ENCODE measurements at regions of chr18 and their contacts with region 1.

Region 1: DNA sequence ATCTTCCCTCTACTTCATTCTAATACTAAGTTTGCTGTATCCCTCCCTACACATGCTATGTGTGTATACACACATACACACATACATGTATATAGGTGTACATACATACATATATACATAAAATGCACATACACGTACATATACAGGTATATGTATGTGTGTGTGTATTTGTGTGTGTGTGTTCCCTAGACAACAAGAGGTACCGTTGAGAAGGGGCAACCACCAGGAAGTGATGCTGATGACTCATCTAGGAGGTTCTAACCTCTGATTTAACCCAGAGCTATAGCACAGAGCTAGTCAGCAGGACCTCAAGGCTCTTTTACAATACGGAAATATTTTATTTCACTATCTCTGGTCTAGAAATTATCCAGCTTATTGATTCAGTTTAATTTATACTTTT is 139.2 kb downstream of the LAMA3 start:
- DNase-seq: peak in 12 of 14 experiments; percentile 4 to 91 (median 36)
- ATAC-seq: peak; percentile 96
- H3K4me3 ChIP-seq: no peak overlapping the region
- H3K4me3 Mint-ChIP-seq: no peak overlapping the region
- H3K27ac ChIP-seq: peak overlapping the region in 1 of 2 donors; percentile 70
- H3K27ac Mint-ChIP-seq: peak overlapping the region; percentile 25
- H3K4me1 ChIP-seq: peaks cover 15% of the 10 kb centered on the region
- H3K4me1 Mint-ChIP-seq: peaks cover 33% of the 10 kb centered on the region
- H3K27me3 ChIP-seq: no peaks in the 10 kb centered on the region
- H3K27me3 Mint-ChIP-seq: no peaks in the 10 kb centered on the region
- CTCF ChIP-seq: no peak

Region 2: DNA sequence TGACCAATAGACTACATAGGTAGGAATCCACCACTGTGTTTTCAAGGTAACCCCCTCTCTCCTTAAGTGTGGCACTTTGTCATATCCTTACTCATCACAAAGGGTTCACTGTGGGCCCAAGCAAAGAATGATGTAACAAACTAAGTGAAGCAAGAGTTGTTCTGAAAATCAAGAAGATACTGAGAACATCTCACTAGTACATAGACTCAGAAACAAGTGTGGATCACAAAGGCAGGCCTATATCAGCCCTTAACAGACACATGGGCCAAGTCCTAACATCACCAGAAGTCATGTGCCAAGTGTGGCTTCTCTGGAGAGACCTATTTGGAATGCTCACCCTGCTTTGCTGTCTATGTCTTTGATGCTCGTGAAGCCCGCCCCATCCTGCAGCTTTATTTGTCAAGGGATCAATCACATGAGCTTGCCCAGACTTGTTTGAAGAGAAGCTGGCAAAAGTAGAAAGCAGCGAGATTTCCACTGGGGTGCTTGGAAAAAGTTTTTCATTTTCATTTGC is 54.9 kb after region 1 on chr18:
- CTCF ChIA-PET with region 1: no interaction called
- POLR2A ChIA-PET with region 1: no interaction called
- intact Hi-C with region 1: no loop called
- DNase-seq: no peak
- ATAC-seq: no peak
- H3K4me3 ChIP-seq: no peak overlapping the region
- H3K4me3 Mint-ChIP-seq: no peak overlapping the region
- H3K27ac ChIP-seq: no peak overlapping the region
- H3K27ac Mint-ChIP-seq: no peak overlapping the region
- H3K4me1 ChIP-seq: peaks cover 21% of the 10 kb centered on the region
- H3K4me1 Mint-ChIP-seq: peaks cover 29% of the 10 kb centered on the region
- H3K27me3 ChIP-seq: no peaks in the 10 kb centered on the region
- H3K27me3 Mint-ChIP-seq: no peaks in the 10 kb centered on the region
- CTCF ChIP-seq: no peak

Region 3: DNA sequence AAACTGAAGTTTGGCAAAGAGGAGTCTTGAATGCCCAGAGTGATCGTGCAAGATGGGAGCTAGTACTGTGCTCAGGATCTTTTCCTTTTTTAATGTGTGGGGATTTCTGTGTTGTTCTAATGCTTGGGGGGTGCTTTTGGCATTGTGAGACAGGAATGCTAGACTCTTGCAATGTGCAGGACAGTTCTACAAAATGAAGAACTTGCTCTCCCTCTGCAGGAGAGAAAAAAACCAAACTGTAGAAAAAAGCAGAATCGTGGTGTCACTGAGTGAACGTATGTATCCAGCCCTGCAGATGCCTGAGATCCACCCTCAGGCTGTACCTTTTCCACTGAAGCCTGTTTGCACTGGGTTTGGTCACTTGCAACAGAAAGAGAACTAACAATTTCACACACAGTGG is 174.1 kb after region 1 on chr18:
- CTCF ChIA-PET with region 1: no interaction called
- POLR2A ChIA-PET with region 1: no interaction called
- intact Hi-C with region 1: loop called in 1 of 2 experiments (anchors 5 kb)
- DNase-seq: peak in 2 of 14 experiments; percentile 50 to 54
- ATAC-seq: no peak
- H3K4me3 ChIP-seq: no peak overlapping the region
- H3K4me3 Mint-ChIP-seq: peak overlapping the region; percentile 37
- H3K27ac ChIP-seq: peak overlapping the region in 1 of 2 donors; percentile 70
- H3K27ac Mint-ChIP-seq: peak overlapping the region; percentile 77
- H3K4me1 ChIP-seq: peaks cover 94% of the 10 kb centered on the region
- H3K4me1 Mint-ChIP-seq: peaks cover 70% of the 10 kb centered on the region
- H3K27me3 ChIP-seq: no peaks in the 10 kb centered on the region
- H3K27me3 Mint-ChIP-seq: no peaks in the 10 kb centered on the region
- CTCF ChIP-seq: no peak